Activated CD8-positive, alpha-beta memory T cell treated with anti-CD3 and anti-CD28 coated beads, Interleukin-2, amount 10 ng/mL, durations not matched to agents 7 days and 5 days (primary cell): ENCODE measurements at regions of chr1 and their contacts with region 1.

Region 1: DNA sequence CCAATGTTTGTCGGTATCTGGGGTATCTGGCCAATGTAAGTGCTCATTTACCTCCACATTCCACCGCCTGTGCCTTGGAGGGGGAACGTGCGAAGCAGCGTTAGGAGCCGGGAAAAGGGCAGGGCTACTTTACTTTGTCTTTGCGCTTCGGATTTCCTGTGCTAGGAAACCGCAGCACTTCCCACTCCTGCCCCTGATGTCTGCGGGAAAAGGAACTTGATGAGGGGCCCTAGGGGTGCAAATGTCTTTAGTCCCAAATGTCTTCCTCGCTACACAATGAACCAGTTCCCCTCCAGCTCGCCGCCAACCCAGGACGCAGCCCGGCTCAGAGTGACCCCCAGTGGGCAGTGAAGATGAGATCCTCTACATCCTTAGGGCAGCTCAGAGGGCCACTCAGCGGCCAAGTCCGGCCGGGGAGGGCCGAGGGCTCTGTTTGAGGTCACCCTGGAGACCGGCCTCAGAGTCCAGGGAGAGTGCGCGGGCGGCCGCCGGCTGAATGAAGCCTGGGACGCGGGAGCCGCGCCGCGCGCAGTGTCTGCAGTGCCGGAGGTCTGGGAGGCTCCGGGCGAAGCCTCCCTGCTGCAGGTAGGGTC is at the start of gene DYNLT5:
- DNase-seq: no peak
- ATAC-seq: no peak
- H3K4me3 Mint-ChIP-seq: peak within 1 kb of the TSS; percentile 46
- H3K27ac Mint-ChIP-seq: no peak within 1 kb of the TSS
- H3K4me1 Mint-ChIP-seq: peaks cover 12% of the 10 kb centered on the region
- H3K27me3 Mint-ChIP-seq: peaks cover 65% of the 10 kb centered on the region
- total RNA-seq, gene DYNLT5: not detected

Region 2: GRCh38 chr1:66732407-66733166 is 19.5 kb before region 1 on chr1:
- CTCF ChIA-PET with region 1: no interaction called
- DNase-seq: no peak
- ATAC-seq: peak; percentile 85
- H3K4me3 Mint-ChIP-seq: no peak overlapping the region
- H3K27ac Mint-ChIP-seq: peak overlapping the region; percentile 70
- H3K4me1 Mint-ChIP-seq: peaks cover 25% of the 10 kb centered on the region
- H3K27me3 Mint-ChIP-seq: peaks cover 5% of the 10 kb centered on the region

Region 3: DNA sequence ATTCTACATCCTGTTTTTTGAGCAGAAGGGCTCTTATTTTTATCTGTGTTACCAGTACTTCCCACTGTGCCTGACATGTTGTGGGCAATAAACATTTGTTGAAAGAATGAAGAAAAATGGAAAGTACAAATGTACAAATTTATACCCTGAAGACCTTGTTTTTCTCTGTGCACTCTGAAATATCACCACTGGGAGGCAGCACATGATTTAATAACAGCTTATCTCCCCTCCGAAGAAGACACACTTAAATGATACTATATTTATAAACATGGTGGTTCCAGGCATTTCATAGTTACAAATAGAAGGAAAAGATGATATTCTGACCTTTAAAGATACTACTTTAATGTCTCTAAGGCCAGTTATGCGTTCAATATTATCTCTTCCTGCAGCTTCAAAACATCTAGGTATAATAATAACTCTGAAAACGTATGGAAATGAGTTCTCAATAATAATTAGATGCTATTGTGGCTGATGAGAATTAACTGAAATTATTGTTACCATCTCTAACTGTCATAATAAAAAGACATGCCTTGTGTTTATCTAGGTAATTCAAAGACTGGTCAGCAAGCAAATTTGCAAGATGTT is 13.0 kb after region 1 on chr1:
- CTCF ChIA-PET with region 1: interaction called, 11 read pairs
- DNase-seq: peak; percentile 67
- ATAC-seq: no peak
- H3K4me3 Mint-ChIP-seq: no peak overlapping the region
- H3K27ac Mint-ChIP-seq: no peak overlapping the region
- H3K4me1 Mint-ChIP-seq: peaks cover 16% of the 10 kb centered on the region
- H3K27me3 Mint-ChIP-seq: no peaks in the 10 kb centered on the region

Region 4: GRCh38 chr1:67013573-67013972 is 261.5 kb after region 1 on chr1:
- CTCF ChIA-PET with region 1: no interaction called
- DNase-seq: no peak
- ATAC-seq: no peak
- H3K4me3 Mint-ChIP-seq: no peak overlapping the region
- H3K27ac Mint-ChIP-seq: no peak overlapping the region
- H3K4me1 Mint-ChIP-seq: peaks cover 2% of the 10 kb centered on the region
- H3K27me3 Mint-ChIP-seq: no peaks in the 10 kb centered on the region